OCI-LY7 (cell line): ENCODE measurements at regions of chr6 and their contacts with region 1.

Region 1: GRCh38 chr6:87066449-87067333 is 28.2 kb downstream of the CGA start:
- DNase-seq: peak; percentile 78
- H3K4me3 ChIP-seq: peak overlapping the region; percentile 61
- H3K27ac ChIP-seq: no peak overlapping the region
- H3K4me1 ChIP-seq: peaks cover 6% of the 10 kb centered on the region
- CTCF ChIP-seq: peak; percentile 93

Region 2: DNA sequence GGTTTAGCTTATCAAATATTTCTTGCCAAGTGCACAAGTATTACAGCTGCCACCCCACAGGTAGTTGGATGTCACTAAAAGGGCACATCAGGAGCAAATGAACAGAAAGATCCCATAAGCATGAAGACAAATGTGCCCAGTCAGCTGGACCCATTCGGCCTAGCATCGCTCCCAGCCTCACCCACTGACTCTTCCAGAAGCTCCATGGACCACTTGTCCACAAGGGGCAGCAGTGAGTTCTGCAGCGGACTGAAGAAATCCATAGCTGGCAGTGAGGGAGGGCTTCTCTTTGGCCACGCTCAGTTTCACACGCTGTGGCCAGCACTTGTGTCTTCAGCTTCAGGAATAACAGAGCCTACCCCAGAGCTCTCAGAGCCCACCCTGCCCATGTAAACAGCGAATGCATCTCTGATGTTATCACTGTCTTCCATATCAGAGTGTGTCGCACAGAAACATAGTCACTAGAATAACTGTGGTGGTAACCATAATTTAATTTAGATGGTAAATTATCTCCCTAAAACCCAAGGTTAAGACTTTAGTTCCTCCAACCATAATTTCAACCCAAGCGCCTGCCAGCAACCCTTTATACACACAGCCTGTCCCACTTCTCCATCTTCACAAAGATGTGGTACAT is 12.4 kb after region 1 on chr6:
- CTCF ChIA-PET with region 1: interaction called, 7 read pairs
- POLR2A ChIA-PET with region 1: interaction called, 10 read pairs
- intact Hi-C with region 1: no loop called
- DNase-seq: peak; percentile 69
- H3K4me3 ChIP-seq: no peak overlapping the region
- H3K27ac ChIP-seq: no peak overlapping the region
- H3K4me1 ChIP-seq: no peaks in the 10 kb centered on the region
- CTCF ChIP-seq: peak; percentile 94

Region 3: DNA sequence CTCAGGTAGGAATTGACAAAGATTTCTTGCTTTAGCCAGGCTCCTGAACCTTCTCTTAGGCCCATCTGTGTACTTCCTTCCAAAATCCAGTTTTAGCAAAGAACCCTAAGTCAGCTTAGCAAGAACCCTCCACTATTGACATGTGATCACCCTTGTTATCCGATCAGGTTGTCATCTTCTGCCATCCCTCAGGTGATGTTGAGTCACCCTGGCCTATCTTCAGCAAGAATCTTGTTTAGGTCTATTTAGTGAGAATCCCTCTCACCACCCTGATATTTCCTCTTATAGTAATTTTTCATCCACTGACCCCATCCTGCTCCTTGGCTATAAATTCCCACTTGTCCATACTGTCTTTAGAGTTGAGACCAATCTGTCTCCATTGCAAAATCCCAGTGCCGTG is 66.5 kb after region 1 on chr6:
- CTCF ChIA-PET with region 1: no interaction called
- POLR2A ChIA-PET with region 1: interaction called, 12 read pairs
- intact Hi-C with region 1: no loop called
- DNase-seq: no peak
- H3K4me3 ChIP-seq: no peak overlapping the region
- H3K27ac ChIP-seq: no peak overlapping the region
- H3K4me1 ChIP-seq: no peaks in the 10 kb centered on the region
- CTCF ChIP-seq: no peak